ENCODE measurements at regions of chr6 and their contacts with region 1.

Region 1: DNA sequence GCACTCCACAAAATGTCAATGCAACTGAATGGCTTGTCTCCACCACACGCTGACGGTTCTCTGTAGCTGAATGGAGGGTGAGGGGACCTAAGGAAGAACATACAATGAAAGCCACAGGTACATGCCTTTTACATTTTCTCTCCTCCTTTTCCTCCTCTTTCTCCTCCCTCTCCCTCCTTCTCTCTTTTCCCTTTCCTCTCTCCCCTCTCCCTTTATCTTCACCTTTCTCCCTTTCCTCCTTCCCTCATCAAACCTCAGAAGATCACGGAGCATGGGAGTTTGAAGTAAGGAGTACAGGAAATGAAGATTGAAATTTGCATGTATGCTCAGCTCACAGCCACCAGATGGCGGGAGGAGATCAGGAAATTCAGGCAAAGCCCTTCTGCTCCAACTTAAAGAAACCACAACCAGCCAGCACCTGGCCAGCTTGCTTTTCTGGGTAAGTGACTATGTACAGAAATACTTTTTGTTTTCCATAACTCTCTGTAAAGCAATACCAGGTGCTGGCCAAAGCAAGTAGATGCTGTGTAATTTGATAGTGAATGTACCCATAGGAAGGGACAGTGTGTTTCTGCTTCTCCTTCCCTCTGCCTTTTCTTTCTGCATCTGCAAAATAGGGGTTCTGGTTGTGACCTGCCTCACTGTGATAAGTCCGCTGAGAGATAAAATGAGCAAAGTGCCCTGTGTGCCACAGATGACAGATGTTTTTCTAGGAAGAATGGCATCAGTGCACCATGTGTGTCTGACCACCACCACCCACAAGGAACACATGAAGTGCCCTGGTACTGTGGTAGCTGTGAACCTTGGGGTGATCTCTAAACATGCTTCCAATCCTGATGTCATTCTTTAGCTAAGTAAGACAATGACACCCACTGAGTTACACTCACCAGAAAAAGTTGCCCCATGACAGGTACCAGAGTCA is 18.6 kb upstream of the FOXO3 start:
- DNase-seq: peak; percentile 41 to 89 (median 76)

Region 2: GRCh38 chr6:108492131-108492766 is 49.9 kb before region 1 on chr6:
- intact Hi-C with region 1: no loop called
- DNase-seq: peak in 8 of 42 donors; percentile 8 to 51 (median 16)

Region 3: DNA sequence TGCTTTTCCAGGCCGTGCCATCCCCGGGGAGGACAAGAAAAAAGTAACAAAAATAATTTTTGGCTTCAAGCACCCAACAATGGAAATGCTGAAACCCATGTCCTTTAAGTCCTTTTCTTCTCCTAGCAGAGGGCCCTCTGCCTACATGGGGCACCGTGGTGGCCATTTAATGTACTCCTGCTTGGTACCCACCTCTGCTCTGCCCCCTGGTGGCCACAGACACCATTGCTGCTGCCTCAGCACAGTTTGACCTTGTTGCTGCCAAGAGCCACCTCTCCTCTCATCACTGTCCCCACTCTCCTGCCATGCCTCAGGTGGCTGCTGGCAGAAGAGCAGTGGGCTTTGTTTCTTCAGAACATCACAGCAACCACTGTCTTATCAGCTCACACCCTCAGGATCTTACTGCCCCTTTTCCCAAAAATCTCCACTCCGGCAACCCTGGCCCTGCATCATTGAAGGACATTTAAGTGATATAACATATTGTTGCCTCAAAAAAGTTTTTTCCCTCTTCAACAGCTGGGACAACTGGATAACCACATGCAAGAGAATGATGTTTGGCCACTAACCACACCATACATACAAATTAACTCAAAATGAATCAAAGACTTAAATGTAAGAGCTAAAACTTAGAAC is 293.2 kb after region 1 on chr6:
- intact Hi-C with region 1: loop called (anchors 5 kb)
- DNase-seq: peak; percentile 64 to 97 (median 92)

Region 4: GRCh38 chr6:108896111-108896661 is 354.1 kb after region 1 on chr6:
- intact Hi-C with region 1: loop called (anchors 5 kb)
- DNase-seq: no peak

Region 5: GRCh38 chr6:109073344-109074132 is 531.4 kb after region 1 on chr6:
- intact Hi-C with region 1: loop called (anchors 5 kb)
- DNase-seq: peak in 21 of 42 donors; percentile 20 to 84 (median 50)